ENCODE measurements at regions of chr1 and their contacts with region 1.

Region 1: DNA sequence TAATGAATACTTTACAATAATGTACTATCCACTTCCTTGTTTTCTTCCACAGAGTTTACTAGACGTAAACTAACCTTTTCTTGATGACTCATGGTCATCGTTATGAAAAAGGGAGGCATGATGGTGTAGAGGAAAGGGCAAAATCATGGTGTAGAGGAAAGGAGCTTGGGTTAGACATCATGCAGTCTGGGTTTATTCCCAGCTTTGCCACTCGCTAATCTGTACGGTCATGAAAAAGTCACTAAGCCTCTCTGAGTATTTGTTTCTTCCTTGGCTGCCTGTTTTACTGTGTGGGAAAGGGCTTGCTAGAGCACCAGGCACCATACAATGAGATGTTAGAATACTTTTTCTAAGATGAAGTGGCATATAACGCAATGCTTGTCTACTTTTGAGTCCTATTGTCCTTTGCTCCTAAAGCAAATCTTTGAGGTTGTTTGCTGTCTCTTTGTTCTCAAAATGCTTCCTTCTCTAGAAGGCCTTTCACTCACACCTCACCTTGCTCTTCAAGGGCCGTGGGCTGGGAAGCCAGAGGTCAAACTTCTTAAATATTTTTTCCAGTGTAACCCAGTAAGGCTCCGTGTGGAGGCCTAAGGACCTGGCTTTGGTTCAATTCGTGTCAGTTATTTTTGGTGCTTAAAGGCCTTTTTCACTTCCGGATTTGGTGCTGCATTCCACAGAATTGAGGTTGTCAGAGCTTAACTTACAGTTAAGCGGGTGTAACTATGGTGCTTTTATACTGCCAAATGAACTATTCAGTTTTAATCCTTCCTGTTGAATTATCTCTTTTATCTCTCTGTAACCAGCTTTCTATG is 9.9 kb upstream of the ETV3 start:
- DNase-seq: no peak
- H3K4me3 Mint-ChIP-seq: no peak overlapping the region
- H3K27ac Mint-ChIP-seq: peak overlapping the region; percentile 6
- H3K4me1 Mint-ChIP-seq: peaks cover 32% of the 10 kb centered on the region
- H3K27me3 Mint-ChIP-seq: peaks cover 4% of the 10 kb centered on the region

Region 2: DNA sequence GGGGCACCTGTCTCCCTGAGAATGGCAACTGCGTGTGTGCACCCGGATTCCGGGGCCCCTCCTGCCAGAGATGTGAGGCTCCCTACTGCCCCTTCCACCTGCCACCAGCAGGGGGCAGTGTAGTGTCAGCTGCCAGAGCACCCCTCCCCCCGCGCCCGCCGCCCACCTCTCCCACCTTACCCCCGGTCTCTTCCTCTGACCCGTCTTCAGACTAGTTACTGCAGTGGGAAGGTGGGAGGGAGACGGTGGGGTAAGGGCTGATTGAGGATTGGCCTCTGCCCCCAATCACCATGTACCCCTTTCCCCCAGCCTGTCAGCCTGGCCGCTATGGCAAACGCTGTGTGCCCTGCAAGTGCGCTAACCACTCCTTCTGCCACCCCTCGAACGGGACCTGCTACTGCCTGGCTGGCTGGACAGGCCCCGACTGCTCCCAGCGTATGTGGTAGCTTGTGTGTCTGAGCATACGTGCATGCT is 237.8 kb before region 1 on chr1:
- intact Hi-C with region 1: no loop called
- DNase-seq: peak; percentile 88
- H3K4me3 Mint-ChIP-seq: no peak overlapping the region
- H3K27ac Mint-ChIP-seq: no peak overlapping the region
- H3K4me1 Mint-ChIP-seq: peaks cover 11% of the 10 kb centered on the region
- H3K27me3 Mint-ChIP-seq: peaks cover 15% of the 10 kb centered on the region

Region 3: DNA sequence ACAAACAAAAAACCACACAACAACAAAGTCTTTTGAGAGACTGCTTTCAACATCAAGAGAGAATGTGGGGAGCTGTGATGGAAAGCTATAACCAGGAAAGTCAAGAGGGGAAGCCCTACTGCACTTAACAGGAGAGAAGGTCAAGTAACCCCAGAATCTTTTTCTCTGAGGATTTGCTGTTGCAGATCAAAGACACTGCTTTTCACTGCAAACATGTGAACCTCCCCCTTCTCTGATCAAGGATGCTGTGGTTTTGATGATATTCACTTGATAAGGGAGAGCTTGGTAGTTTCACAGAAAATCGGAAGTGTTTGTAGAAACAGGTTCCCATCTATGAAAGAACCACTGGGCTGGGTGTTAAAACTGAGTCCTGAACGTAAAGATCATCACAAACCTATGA is 14.7 kb before region 1 on chr1:
- intact Hi-C with region 1: loop called (anchors 2 kb)
- DNase-seq: peak; percentile 86
- H3K4me3 Mint-ChIP-seq: peak overlapping the region; percentile 99
- H3K27ac Mint-ChIP-seq: peak overlapping the region; percentile 82
- H3K4me1 Mint-ChIP-seq: peaks cover 59% of the 10 kb centered on the region
- H3K27me3 Mint-ChIP-seq: no peaks in the 10 kb centered on the region

Region 4: DNA sequence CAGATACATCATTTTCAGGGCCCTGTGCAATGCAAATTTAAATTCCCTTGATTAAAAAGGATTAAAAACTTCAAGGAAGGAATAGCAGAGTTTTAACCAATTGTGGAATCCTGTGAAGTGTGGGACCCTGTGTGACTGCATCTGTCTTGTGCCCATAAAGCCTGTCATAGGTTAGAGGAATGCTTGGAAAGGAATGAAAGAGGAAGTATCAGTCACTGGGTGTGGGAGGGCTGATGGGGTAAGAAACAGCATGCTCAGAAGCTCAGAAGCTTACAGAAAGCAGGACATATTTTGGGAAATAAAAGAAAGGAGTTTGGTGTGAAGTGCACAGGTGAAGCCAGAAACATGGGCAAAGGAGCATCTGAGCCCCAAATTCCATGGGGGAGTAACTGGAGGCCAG is 140.9 kb after region 1 on chr1:
- intact Hi-C with region 1: no loop called
- DNase-seq: no peak
- H3K4me3 Mint-ChIP-seq: no peak overlapping the region
- H3K27ac Mint-ChIP-seq: no peak overlapping the region
- H3K4me1 Mint-ChIP-seq: no peaks in the 10 kb centered on the region
- H3K27me3 Mint-ChIP-seq: peaks cover 4% of the 10 kb centered on the region